Right ventricle myocardium superior (tissue), 1 donor: ENCODE measurements at regions of chrX and their contacts with region 1.

Region 1: DNA sequence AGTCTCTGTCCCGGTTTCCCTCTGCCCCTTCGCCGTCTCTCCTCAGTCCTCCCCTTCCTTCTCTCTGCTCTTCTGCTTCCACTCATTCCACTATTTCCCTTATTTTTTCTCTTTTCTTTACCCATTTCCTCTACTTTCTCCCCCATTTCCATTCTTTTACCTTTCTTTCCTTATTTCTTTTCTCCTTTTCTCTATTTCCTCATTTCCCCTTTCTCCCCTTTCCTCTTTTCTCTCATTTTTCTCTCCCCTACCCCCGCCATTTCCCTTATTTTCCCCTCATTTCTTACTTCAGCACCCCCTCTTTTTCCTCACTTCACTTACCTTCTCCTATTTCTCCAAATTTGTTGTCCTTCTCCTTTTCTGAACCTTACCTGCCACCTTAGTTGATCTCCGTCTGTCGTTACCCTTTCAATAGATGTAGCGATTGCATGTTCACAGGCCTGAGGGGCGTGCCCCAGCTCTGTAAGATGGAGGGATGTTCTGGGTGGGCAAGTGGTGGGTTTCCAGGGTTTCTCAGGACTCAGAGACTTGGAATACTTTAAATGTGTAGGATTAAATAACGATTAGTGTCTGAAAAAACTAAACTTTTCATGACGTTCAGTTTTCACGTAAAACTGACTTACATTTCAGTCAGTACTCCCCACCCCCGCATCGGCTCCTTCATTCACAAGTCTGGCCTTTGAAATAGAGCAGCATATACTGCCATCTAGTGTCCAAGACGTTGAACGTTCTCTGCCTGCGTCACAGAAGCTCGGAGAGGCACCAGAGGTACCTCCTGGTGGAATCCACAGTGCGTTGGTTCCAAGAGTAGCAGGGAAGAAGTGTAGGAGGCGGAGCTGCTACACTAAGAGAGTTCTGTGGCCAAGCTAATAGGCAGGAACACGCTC is 641 bp upstream of the NCBP2L start:
- DNase-seq: peak; percentile 80
- ATAC-seq: peak; percentile 80

Region 2: GRCh38 chrX:107654872-107655761 is 121.8 kb before region 1 on chrX:
- intact Hi-C with region 1: loop called (anchors 2 kb)
- DNase-seq: peak; percentile 71
- ATAC-seq: peak; percentile 72

Region 3: GRCh38 chrX:107672955-107673378 is 103.9 kb before region 1 on chrX:
- intact Hi-C with region 1: loop called (anchors 5 kb)
- DNase-seq: peak; percentile 80
- ATAC-seq: peak; percentile 44

Region 4: DNA sequence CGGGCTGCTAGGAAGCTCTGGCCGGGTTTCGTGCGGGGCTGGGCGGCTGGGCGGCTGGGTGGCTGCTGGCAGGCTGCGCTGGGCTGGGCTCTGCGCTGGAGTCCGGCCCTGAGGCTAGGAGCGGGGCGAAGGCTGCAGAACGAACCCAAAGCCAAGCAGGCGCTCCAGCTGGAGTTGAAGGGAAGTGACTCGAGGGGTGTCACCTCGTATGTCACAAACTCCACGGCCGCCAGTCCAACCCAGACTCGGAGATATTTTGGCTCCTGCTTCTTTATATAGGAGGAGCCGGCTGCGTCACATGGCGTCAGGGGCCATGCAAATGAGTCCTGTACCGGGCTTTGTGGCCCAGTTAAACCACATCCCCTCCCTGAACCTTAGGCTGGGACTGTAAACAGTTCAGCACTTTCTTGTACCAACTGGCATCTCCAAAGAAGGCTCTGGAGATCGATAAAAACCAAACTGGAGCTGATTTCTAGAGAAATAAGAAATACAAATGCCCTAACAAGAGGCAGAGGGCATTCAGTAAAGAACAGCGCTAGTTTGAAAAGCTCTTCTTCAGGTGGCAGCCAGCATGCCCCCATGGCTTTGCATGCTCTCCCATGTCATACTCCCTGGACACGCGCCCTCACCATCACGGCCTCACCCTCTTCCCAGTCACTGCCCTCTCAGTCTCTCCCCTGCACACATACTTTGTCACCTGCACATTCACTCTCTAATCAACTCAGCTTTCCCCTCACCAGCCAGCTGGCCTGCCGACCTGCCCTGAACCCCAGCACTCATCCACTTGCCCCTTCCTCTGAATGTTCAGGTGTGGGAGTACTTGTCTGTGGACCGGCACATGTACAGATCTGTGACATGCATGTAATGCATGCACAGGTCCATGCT is 59.8 kb before region 1 on chrX:
- intact Hi-C with region 1: loop called (anchors 5 kb)
- DNase-seq: peak; percentile 91
- ATAC-seq: peak; percentile 77

Region 5: GRCh38 chrX:107731831-107732502 is 44.9 kb before region 1 on chrX:
- intact Hi-C with region 1: loop called (anchors 5 kb)
- DNase-seq: peak; percentile 91
- ATAC-seq: peak; percentile 78

Region 6: DNA sequence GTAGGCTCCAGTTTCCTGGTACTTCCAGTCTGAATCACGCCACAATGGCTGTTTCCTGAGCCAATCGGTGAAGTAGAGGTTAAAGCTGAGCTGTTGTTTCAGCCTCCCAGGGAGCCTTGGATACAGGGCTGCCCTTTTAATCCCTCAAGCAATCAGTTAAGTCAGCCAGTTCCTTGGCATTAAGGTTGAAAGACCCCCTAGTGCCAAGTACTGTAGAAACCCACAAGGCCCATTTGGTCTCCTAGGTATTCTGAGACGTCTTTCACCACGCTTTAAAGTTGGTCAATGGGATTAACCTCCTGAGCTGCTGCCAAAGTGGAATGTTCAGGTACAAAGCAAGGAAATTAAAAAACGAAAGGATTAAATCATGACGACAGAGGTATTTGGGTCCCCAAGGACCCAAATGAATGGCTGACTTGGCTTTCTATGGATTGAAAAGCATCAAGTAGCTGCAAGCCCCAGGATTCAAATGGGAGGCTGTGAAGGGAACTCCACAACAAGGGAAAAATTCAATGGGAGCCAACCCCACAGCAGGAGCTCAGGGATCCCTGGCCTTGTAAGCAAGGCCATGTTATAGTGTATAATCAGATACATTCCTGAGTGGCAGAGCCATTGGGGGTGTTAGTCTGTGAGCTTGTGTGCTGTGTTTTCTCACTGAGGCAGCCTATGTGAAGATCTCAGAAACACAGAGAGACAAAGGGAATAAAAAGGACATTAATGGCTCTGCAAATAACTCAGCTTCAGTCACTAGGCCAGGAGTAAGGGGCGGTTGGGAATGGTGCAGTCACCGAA is 400.7 kb after region 1 on chrX:
- intact Hi-C with region 1: no loop called
- DNase-seq: no peak
- ATAC-seq: no peak